Esophagus muscularis mucosa (tissue), 4 donors: ENCODE measurements at regions of chrX and their contacts with region 1.

Region 1: GRCh38 chrX:74614093-74614909 is at the start of gene RLIM:
- DNase-seq: peak; percentile 98
- H3K4me3 ChIP-seq: peak within 1 kb of the TSS; percentile 67 to 81 (median 76)
- H3K27ac ChIP-seq: peak within 1 kb of the TSS; percentile 91 to 97 (median 97)
- H3K4me1 ChIP-seq: peaks cover 0 to 19% (median 16%) of the 10 kb centered on the region in 4 donors
- H3K27me3 ChIP-seq: no peaks in the 10 kb centered on the region
- CTCF ChIP-seq: no peak
- EP300 ChIP-seq: peak; percentile 84
- POLR2A ChIP-seq: peak; percentile 49
- total RNA-seq, gene RLIM: 19.3 to 47.5 (median 25.0) TPM

Region 2: DNA sequence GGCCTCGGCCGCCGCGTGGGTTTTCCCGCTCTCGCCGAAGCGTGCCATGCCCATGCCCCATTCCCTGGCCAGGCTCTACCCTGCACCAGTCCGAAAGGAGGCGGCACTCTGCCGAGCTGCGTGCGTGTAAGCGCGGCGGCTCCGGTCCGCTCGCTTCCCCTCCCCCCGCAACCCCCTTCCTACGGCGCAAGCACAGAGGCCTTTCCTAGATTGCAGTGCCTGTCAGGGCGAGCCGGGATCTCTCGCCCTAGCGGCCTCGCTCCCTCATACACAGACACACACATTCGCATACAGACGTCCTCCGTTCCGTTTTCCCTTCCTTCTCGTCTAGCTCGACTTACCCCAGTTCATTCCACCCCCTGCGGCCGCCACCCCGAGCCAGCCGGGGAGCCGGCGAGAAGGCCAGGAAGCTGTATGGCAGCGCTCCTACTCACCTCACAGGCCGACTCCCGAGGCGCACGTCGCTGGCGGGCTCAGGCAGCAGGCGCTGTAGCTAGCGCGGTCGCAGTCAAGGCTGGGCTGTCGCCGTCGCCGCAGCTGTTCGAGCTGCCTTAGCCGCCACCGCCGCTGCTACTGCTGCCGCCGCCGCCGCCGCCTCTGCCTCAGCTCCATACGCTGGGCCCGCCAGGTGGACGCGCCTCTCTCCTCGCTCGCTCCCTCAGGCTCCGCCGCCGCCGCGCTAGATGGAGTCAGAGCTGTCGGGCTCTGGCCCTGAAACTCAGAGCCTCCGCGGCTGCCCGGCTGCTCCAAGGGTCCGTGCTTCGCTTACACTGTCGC is 310.3 kb after region 1 on chrX:
- intact Hi-C with region 1: loop called (anchors 2 kb)
- DNase-seq: no peak
- H3K4me3 ChIP-seq: peak overlapping the region; percentile 60 to 66 (median 62)
- H3K27ac ChIP-seq: peak overlapping the region; percentile 82 to 89 (median 84)
- H3K4me1 ChIP-seq: peaks cover 0 to 22% (median 8%) of the 10 kb centered on the region in 4 donors
- H3K27me3 ChIP-seq: no peaks in the 10 kb centered on the region
- CTCF ChIP-seq: no peak
- EP300 ChIP-seq: no peak
- POLR2A ChIP-seq: no peak

Region 3: DNA sequence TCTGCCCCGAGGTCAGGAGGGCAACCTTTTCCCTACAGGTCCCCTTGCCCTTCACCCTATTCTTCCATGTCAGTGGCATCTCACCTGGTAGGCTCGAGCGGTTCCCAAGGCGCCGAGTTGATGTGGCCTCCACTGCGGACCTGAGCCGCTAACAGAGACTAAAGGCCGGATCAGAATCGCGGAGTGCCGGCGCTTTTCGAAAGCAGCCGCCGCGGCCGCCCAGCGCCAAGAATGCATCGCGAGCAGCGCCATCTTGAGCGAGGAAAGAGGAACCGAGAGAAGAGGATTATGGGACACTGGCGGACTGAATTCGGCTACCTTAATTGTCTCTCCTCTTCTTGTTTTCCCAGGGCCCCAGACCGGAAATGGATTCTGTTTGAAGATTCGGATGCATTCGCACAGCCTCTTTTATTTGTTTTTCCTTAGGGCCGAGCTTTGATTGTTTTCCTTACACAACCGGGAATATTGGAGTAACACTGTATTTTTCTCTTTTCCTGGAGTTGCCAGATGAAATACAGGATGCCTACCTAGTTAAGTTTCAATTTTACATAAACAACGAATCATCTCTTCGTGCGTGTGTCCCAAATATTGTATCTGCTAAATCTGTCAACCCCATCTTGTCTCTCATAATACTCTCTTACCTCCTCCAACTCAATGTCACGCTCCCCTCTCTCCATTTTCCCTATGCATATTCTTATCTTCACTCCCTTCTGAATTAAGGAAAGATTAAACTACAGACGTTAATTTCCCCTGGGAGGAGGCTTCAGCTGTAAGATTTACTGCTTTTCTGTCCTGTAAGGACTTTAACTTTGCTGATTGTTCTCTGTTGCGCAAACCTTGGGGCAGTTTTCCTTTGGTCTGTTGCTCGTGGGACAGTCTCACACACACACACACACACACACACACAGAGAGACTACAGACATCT is 542.0 kb after region 1 on chrX and contains the start of gene ABCB7:
- intact Hi-C with region 1: loop called (anchors 10 kb)
- DNase-seq: no peak
- H3K4me3 ChIP-seq: peak within 1 kb of the TSS; percentile 62 to 72 (median 67)
- H3K27ac ChIP-seq: peak within 1 kb of the TSS; percentile 78 to 84 (median 82)
- H3K4me1 ChIP-seq: peaks cover 0 to 28% (median 18%) of the 10 kb centered on the region in 4 donors
- H3K27me3 ChIP-seq: no peaks in the 10 kb centered on the region
- CTCF ChIP-seq: peak in 1 of 3 experiments; percentile 25
- EP300 ChIP-seq: no peak
- POLR2A ChIP-seq: no peak
- total RNA-seq, gene ABCB7: 32.3 to 46.9 (median 37.5) TPM

Region 4: GRCh38 chrX:75327607-75328006 is 713.3 kb after region 1 on chrX:
- intact Hi-C with region 1: no loop called
- DNase-seq: no peak
- H3K4me3 ChIP-seq: no peak overlapping the region
- H3K27ac ChIP-seq: no peak overlapping the region
- H3K4me1 ChIP-seq: no peaks in the 10 kb centered on the region
- H3K27me3 ChIP-seq: no peaks in the 10 kb centered on the region
- CTCF ChIP-seq: no peak
- EP300 ChIP-seq: no peak
- POLR2A ChIP-seq: no peak